ENCODE measurements at regions of chr15 and their contacts with region 1.

Region 1: GRCh38 chr15:32676169-32676568 is 34.7 kb downstream of the SCG5 start:
- DNase-seq: no peak
- ATAC-seq: no peak
- H3K4me3 ChIP-seq: no peak overlapping the region
- H3K4me3 Mint-ChIP-seq: no peak overlapping the region
- H3K27ac ChIP-seq: no peak overlapping the region
- H3K27ac Mint-ChIP-seq: no peak overlapping the region
- H3K4me1 ChIP-seq: no peaks in the 10 kb centered on the region
- H3K4me1 Mint-ChIP-seq: no peaks in the 10 kb centered on the region
- H3K27me3 ChIP-seq: no peaks in the 10 kb centered on the region
- H3K27me3 Mint-ChIP-seq: no peaks in the 10 kb centered on the region

Region 2: DNA sequence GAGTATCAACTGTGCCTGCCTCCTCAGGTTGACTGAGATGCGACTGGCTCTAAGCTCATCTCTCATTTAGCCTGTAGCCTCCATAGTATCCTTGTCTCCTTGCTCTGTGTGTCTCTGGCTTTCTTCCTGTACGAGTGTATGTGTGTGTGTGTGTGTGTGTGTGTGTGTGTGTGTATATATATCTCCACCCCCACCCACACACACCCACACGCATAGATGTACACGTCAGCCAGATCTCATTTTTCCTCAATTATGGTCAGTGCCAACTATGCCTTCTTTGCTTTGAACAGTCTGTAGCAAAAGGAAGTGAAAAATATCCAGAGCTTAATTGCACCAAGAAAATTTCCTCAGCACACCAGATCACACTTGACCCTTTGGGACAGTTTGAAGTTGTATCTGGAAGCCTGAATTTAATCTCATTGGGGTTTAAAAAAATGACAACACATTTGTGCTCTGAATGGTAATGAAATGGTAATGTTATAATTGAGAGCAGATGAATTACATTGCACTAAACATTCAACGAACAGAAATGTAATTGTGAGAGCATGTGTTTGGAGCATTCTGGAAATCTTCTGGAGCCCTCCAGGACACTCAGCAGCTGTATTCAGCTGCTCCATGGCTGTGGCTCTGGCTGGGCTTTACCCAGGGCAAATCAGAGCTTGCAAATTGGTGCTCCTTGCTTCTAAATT is 698.2 kb after region 1 on chr15:
- CTCF ChIA-PET with region 1: no interaction called
- POLR2A ChIA-PET with region 1: interaction called in 1 of 2 experiments, 10 read pairs
- DNase-seq: no peak
- ATAC-seq: no peak
- H3K4me3 ChIP-seq: no peak overlapping the region
- H3K4me3 Mint-ChIP-seq: no peak overlapping the region
- H3K27ac ChIP-seq: no peak overlapping the region
- H3K27ac Mint-ChIP-seq: no peak overlapping the region
- H3K4me1 ChIP-seq: no peaks in the 10 kb centered on the region
- H3K4me1 Mint-ChIP-seq: no peaks in the 10 kb centered on the region
- H3K27me3 ChIP-seq: no peaks in the 10 kb centered on the region
- H3K27me3 Mint-ChIP-seq: peaks cover 7 to 21% of the 10 kb centered on the region in 2 donors

Measured in T-cell (primary cell).